ENCODE measurements at regions of chr14 and their contacts with region 1.

Region 1: GRCh38 chr14:30214461-30215090 is 286.9 kb upstream of the PRKD1 start:
- DNase-seq: no peak
- ATAC-seq: peak in 1 of 2 donors; percentile 58
- H3K4me3 ChIP-seq: no peak overlapping the region
- H3K27ac ChIP-seq: no peak overlapping the region
- H3K4me1 ChIP-seq: no peaks in the 10 kb centered on the region
- H3K27me3 ChIP-seq: no peaks in the 10 kb centered on the region
- CTCF ChIP-seq: peak; percentile 20 to 54 (median 44)
- POLR2A ChIP-seq: no peak

Region 2: GRCh38 chr14:28751467-28752058 is 1463.0 kb before region 1 on chr14:
- in situ Hi-C with region 1: loop called in 1 of 4 experiments (anchors 25 kb)
- intact Hi-C with region 1: loop called (anchors 5 kb)
- DNase-seq: no peak
- ATAC-seq: no peak
- H3K4me3 ChIP-seq: no peak overlapping the region
- H3K27ac ChIP-seq: no peak overlapping the region
- H3K4me1 ChIP-seq: no peaks in the 10 kb centered on the region
- H3K27me3 ChIP-seq: peaks cover 22 to 31% (median 24%) of the 10 kb centered on the region in 3 donors
- CTCF ChIP-seq: no peak
- POLR2A ChIP-seq: no peak

Region 3: GRCh38 chr14:29548948-29549370 is 665.6 kb before region 1 on chr14:
- in situ Hi-C with region 1: loop called (anchors 5 to 25 kb)
- intact Hi-C with region 1: no loop called
- DNase-seq: no peak
- ATAC-seq: peak in 1 of 2 donors; percentile 60
- H3K4me3 ChIP-seq: no peak overlapping the region
- H3K27ac ChIP-seq: no peak overlapping the region
- H3K4me1 ChIP-seq: no peaks in the 10 kb centered on the region
- H3K27me3 ChIP-seq: no peaks in the 10 kb centered on the region
- CTCF ChIP-seq: peak; percentile 28 to 64 (median 44)
- POLR2A ChIP-seq: no peak

Region 4: DNA sequence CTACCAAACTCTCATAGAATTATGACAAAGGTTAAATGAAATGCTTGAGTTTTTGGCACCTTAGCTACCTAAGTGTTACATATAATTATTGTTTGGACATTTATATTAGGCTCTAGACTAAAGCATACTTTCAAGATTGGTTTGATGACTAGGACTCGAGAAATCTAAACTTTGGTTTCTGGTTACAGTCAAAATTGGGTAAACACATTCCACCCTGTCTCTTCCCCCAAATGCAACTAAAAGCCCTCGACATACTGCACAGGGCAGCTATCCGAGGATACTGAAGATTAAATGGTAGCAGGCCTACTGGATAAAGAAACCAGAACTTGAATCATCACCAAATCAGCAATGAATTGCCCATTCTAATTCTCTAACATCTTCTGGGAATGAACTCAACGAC is 656.1 kb before region 1 on chr14:
- in situ Hi-C with region 1: loop called in 3 of 4 experiments (anchors 5 to 25 kb)
- intact Hi-C with region 1: no loop called
- DNase-seq: no peak
- ATAC-seq: no peak
- H3K4me3 ChIP-seq: no peak overlapping the region
- H3K27ac ChIP-seq: no peak overlapping the region
- H3K4me1 ChIP-seq: no peaks in the 10 kb centered on the region
- H3K27me3 ChIP-seq: no peaks in the 10 kb centered on the region
- CTCF ChIP-seq: no peak
- POLR2A ChIP-seq: no peak

Measured in gastrocnemius medialis (tissue), 4 donors.